Dendritic cell treated with granulocyte-macrophage colony-stimulating factor and Interleukin-4, amounts not matched to agents 40 ng/mL and 50 ng/mL, for 4 days (primary cell): ENCODE measurements at regions of chr5 and their contacts with region 1.

Region 1: DNA sequence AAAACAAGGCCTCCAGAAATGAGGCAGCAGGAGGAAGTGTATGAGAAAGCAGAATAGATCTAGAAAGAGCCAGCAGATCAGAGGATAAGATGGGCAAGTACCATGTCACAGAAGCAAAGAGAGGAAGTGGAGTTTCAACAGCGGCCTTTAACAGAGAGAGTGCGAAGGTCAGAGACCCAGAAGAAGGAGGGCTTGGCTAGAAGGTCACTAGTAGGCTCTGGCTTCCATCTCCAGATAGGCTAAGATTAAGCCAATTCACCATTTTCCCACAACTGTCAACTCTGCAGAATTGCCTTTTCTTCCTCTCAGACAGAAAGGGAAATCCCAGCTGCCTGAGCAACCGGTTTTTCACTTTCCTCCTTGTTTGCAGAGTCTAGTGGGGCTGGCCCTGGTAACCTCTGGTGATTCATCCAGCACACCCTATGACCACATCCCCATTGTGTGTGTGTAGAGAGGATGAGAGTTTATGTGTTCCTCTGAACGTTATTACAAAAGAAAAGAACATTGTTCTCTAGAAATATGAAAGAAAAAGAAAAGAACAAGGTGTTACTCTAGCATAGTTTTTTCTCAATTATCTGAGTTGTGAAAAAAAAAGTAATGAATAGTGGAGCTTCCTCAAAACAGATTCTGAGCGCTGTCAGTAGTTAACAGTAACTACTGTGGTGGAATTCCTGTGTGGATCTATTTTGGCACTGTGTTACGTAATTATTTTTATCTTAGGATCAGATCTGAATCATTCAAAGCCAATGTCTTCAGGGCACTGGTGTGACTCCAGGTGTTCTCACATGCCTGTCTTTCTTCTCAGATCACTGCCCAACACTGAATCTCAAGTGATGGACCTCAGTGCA is 220.4 kb downstream of the ARRDC3 start:
- H3K4me3 Mint-ChIP-seq: no peak overlapping the region
- H3K27ac Mint-ChIP-seq: peak overlapping the region; percentile 86
- H3K4me1 Mint-ChIP-seq: peaks cover 29% of the 10 kb centered on the region
- H3K27me3 Mint-ChIP-seq: no peaks in the 10 kb centered on the region

Region 2: DNA sequence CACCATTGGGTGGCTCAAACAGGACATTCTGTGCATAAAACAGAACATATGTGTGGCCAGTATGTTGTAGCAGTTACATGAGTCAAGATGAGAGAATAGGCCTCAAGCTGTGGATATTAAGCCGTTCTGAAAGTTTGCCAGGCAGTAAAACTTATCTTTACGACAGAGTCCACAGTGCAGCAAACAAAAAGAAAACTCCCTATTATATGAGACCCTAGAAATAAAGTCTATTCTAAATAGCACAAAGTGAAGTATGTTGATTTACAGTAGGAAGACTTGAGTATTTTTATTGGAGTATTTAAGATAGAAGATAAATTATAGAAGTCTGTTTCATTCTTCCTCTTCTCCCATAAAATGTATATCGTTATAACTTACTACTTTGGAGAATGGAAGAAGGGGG is 332.7 kb before region 1 on chr5:
- intact Hi-C with region 1: no loop called
- H3K4me3 Mint-ChIP-seq: no peak overlapping the region
- H3K27ac Mint-ChIP-seq: no peak overlapping the region
- H3K4me1 Mint-ChIP-seq: no peaks in the 10 kb centered on the region
- H3K27me3 Mint-ChIP-seq: no peaks in the 10 kb centered on the region

Region 3: GRCh38 chr5:91183737-91184136 is 21.0 kb after region 1 on chr5:
- intact Hi-C with region 1: loop called (anchors 1 kb)
- H3K4me3 Mint-ChIP-seq: peak overlapping the region; percentile 23
- H3K27ac Mint-ChIP-seq: peak overlapping the region; percentile 85
- H3K4me1 Mint-ChIP-seq: peaks cover 45% of the 10 kb centered on the region
- H3K27me3 Mint-ChIP-seq: no peaks in the 10 kb centered on the region

Region 4: GRCh38 chr5:91280362-91281269 is 117.9 kb after region 1 on chr5:
- intact Hi-C with region 1: loop called (anchors 2 kb)
- H3K4me3 Mint-ChIP-seq: peak overlapping the region; percentile 81
- H3K27ac Mint-ChIP-seq: peak overlapping the region; percentile 100
- H3K4me1 Mint-ChIP-seq: peaks cover 54% of the 10 kb centered on the region
- H3K27me3 Mint-ChIP-seq: peaks cover 1% of the 10 kb centered on the region